Left colon (tissue), 2 donors: ENCODE measurements at regions of chr18 and their contacts with region 1.

Region 1: DNA sequence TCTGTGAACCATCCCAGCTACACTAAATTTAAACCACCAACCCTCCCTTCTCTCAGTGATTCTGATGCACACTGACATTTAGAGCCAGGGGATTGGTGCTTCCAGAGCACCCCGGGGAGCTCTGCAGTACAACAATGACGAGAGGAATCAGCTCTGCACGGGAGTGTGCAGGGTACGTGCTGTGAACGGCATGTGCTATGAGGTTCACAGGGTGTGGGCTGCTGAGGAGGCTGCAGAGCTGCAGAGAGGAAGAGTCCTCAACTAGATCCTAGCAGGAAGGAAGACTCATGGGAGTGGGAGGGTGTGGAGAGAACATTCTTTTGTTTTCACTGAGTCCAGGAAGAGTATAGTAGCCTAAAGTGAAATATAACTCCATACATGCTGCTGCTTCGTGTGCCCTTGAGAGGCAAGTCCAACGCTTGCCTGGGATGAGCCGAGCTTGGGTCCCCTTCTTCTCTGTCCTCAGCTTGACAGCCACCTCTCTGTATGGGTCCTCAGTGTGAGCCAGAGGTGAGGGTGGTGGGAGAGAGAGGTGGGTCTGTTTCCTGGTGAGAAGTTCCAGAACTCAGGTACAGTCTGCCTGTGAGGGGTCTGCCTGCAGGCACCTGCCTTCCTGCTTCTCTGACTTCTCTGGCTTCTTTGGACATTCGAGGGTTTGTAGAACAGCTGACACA is 118.8 kb downstream of the CTIF start:
- DNase-seq: no peak
- ATAC-seq: no peak

Region 2: DNA sequence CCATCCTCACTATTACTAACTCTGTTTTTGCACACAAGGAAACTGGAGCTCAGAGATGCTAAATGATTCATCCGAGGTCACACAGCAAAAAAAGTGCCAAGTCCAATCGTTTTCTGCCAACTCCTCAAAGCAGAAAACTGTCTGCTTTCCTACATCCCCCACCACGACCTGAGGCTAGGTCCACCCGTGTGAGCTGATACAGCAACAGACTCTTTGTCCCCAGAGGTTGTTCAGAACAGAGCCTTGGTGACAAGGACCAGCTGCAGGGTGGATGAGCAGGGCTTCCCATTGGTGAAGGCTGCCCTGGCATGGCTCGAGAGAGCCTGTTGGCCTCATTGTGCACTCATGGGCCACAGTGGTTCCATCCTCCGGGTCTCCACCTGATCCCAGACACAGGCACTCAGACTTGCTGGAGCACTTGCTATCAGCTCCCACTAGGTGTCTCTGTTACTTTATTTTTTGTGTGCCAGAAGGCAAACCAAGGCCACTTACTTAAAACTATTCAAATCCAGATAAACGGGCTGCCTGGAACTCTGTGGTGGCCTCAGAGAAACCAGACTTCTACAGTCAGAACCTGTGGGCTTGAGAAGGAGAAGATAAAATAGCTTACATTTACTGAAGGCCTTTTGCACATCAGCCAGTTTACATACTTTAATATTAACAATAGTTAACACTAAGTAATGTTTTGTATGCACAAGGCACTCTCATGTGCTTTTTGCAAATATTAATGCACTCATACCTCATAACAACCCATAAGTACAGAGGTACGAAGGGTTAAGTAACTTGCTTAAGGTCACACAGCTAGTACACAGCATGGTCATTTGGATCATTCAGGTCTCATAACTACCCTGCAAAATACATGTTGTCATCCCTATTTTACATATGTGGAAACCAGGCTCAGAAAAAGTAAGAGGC is 181.7 kb before region 1 on chr18:
- intact Hi-C with region 1: loop called in 1 of 2 experiments (anchors 5 kb)
- DNase-seq: peak in 1 of 2 donors; percentile 18
- ATAC-seq: peak; percentile 86

Region 3: DNA sequence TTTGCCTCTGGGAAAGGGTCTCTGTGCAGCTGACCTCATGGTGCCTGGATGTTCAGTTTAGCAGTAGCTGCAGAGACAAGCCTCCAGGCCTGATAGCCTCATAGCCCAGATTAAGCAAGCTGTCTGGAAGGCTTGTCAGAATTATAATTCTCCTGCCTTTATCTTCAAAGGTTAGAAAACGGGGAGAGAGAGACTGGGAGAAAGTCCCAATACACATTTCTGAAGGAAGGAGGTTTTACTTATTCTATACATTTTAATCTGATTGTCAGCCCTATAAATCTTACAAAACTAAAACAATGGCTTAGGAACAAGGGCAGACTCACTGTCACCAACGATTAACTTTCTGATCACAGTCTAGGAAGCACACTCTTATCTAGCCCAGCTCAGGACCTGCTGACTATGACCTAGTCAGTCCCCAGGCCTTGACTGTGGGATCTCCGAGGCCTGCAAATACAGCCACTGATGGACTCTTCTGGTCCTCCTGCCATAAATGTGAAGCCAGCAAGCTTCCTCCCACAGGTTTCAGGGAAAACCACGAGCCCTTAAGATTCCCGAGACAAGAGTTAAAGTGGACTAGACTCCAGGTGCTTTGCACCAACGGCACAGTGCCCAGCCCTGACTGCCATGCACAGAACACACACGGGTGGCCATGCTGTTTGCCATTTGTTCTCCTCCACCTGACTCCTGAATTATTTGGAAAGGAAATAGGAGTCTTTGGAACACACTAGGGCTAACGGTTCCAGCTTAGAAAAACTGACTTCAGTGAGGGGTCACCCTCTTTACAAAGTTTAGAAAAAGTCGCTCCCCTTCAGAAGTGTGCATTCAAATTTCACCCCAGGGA is 404.6 kb after region 1 on chr18:
- intact Hi-C with region 1: no loop called
- DNase-seq: no peak
- ATAC-seq: no peak